Ovary (tissue), 10 donors: ENCODE measurements at regions of chr7 and their contacts with region 1.

Region 1: GRCh38 chr7:71854546-71855397 is 557.4 kb downstream of the CALN1 start:
- DNase-seq: no peak
- H3K4me3 ChIP-seq: no peak overlapping the region
- H3K27ac ChIP-seq: no peak overlapping the region
- H3K4me1 ChIP-seq: no peaks in the 10 kb centered on the region
- H3K27me3 ChIP-seq: no peaks in the 10 kb centered on the region
- CTCF ChIP-seq: no peak
- EP300 ChIP-seq: no peak
- POLR2A ChIP-seq: no peak

Region 2: GRCh38 chr7:71077743-71078476 is 776.9 kb before region 1 on chr7:
- intact Hi-C with region 1: loop called in 1 of 4 experiments (anchors 10 kb)
- DNase-seq: no peak
- H3K4me3 ChIP-seq: no peak overlapping the region
- H3K27ac ChIP-seq: no peak overlapping the region
- H3K4me1 ChIP-seq: no peaks in the 10 kb centered on the region
- H3K27me3 ChIP-seq: no peaks in the 10 kb centered on the region
- CTCF ChIP-seq: no peak
- EP300 ChIP-seq: no peak
- POLR2A ChIP-seq: no peak

Region 3: GRCh38 chr7:71733107-71733870 is 121.5 kb before region 1 on chr7:
- intact Hi-C with region 1: no loop called
- DNase-seq: peak; percentile 85 to 93 (median 91)
- H3K4me3 ChIP-seq: peak overlapping the region; percentile 17
- H3K27ac ChIP-seq: no peak overlapping the region
- H3K4me1 ChIP-seq: no peaks in the 10 kb centered on the region
- H3K27me3 ChIP-seq: no peaks in the 10 kb centered on the region
- CTCF ChIP-seq: peak; percentile 89 to 98 (median 94)
- EP300 ChIP-seq: no peak
- POLR2A ChIP-seq: no peak

Region 4: DNA sequence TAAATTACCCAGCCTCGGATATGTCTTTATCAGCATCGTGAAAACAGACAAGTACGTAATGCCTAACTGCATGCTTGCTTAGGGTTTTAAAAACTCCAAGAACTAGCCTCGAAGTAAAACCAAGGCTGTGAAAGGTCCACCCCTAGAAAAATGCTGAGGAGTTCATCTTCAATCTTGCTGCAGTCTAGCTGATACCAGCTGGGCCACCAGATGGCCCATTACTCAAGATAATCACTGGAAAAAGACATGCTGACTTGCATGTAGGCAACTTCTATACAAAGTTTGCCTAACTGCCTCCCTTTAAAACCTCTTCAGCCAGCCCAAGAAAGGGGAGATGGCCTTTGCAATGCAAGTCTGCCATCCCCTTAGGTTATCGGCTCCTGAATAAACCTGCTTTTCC is 108.8 kb before region 1 on chr7:
- intact Hi-C with region 1: no loop called
- DNase-seq: no peak
- H3K4me3 ChIP-seq: no peak overlapping the region
- H3K27ac ChIP-seq: no peak overlapping the region
- H3K4me1 ChIP-seq: no peaks in the 10 kb centered on the region
- H3K27me3 ChIP-seq: no peaks in the 10 kb centered on the region
- CTCF ChIP-seq: no peak
- EP300 ChIP-seq: no peak
- POLR2A ChIP-seq: no peak